ENCODE measurements at regions of chr15 and their contacts with region 1.

Region 1: GRCh38 chr15:64046347-64047153 is at the start of gene DAPK2:
- DNase-seq: peak; percentile 73
- ATAC-seq: peak; percentile 88
- H3K4me3 Mint-ChIP-seq: peak within 1 kb of the TSS; percentile 74
- H3K27ac Mint-ChIP-seq: no peak within 1 kb of the TSS
- H3K4me1 Mint-ChIP-seq: peaks cover 7% of the 10 kb centered on the region
- H3K27me3 Mint-ChIP-seq: peaks cover 51% of the 10 kb centered on the region
- CTCF ChIP-seq: peak; percentile 60
- total RNA-seq, gene DAPK2: 1.0 to 2.3 TPM (median 1.5 TPM) in 3 replicates

Region 2: GRCh38 chr15:64024172-64025050 is 22.1 kb before region 1 on chr15:
- CTCF ChIA-PET with region 1: interaction called, 22 read pairs
- POLR2A ChIA-PET with region 1: no interaction called
- DNase-seq: peak; percentile 29
- ATAC-seq: peak; percentile 73
- H3K4me3 Mint-ChIP-seq: no peak overlapping the region
- H3K27ac Mint-ChIP-seq: no peak overlapping the region
- H3K4me1 Mint-ChIP-seq: peaks cover 16% of the 10 kb centered on the region
- H3K27me3 Mint-ChIP-seq: no peaks in the 10 kb centered on the region
- CTCF ChIP-seq: no peak

Measured in WTC11 (cell line).